Dorsolateral prefrontal cortex (tissue), 120 donors: ENCODE measurements at regions of chr12 and their contacts with region 1.

Region 1: GRCh38 chr12:50074936-50075807 is 10.0 kb upstream of the SMARCD1 start:
- DNase-seq: peak; percentile 80 to 88 (median 82)
- H3K4me3 ChIP-seq: peak overlapping the region in 1 of 59 donors; percentile 12
- H3K27ac ChIP-seq: peak overlapping the region in 3 of 59 donors; percentile 29 to 41 (median 37)
- H3K27me3 ChIP-seq: no peaks in the 10 kb centered on the region
- CTCF ChIP-seq: peak; percentile 71 to 98 (median 94)

Region 2: GRCh38 chr12:50132505-50133135 is 57.4 kb after region 1 on chr12:
- intact Hi-C with region 1: no loop called
- DNase-seq: no peak
- H3K4me3 ChIP-seq: no peak overlapping the region
- H3K27ac ChIP-seq: peak overlapping the region in 43 of 59 donors; percentile 3 to 76 (median 43)
- H3K27me3 ChIP-seq: no peaks in the 10 kb centered on the region
- CTCF ChIP-seq: peak in 53 of 56 donors; percentile 32 to 80 (median 63)

Region 3: GRCh38 chr12:50174971-50175715 is 100.0 kb after region 1 on chr12:
- intact Hi-C with region 1: loop called in 1 of 2 experiments (anchors 2 kb)
- DNase-seq: no peak
- H3K4me3 ChIP-seq: peak overlapping the region in 11 of 59 donors; percentile 3 to 36 (median 16)
- H3K27ac ChIP-seq: peak overlapping the region in 21 of 59 donors; percentile 2 to 75 (median 53)
- H3K27me3 ChIP-seq: no peaks in the 10 kb centered on the region
- CTCF ChIP-seq: peak; percentile 67 to 95 (median 85)